GM10248 (cell line): ENCODE measurements at regions of chr1 and their contacts with region 1.

Region 1: DNA sequence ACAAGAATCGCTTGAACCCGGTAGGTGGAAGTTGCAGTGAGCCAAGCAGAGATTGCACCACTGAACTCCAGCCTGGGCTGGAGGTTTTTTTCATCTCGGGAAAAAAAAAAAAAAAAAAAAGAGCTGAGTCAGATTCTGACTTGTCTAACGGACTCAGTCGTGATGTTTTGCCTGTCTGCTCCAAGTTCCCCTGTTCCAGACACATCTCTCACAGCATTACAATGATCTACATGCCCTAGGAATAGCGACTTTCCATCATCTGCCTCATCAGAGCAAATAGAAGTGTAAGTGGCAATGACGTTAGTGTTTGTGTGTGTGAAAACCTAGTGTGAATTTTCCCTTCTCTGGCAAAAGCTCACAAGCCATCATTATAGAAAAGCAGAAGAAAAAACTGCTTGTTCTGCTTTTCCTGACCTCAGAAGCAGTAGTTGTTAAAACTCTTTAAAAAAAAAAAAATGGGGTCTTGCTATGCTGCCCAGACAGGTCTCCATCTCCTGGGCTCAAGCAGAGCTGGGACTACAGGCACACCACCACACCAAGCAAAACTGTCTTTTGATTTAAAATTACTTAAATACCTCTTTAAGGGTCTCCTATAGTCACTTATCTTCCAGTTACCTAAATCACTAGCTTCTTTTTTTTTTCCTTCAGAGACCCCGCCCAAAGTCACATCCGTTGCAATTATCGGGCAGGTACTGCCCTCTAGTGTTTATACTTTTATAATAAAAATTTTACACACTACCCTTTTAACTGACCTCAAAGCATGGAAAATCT is 37.3 kb downstream of the PLEKHO1 start:
- DNase-seq: peak; percentile 51
- CTCF ChIP-seq: no peak

Region 2: DNA sequence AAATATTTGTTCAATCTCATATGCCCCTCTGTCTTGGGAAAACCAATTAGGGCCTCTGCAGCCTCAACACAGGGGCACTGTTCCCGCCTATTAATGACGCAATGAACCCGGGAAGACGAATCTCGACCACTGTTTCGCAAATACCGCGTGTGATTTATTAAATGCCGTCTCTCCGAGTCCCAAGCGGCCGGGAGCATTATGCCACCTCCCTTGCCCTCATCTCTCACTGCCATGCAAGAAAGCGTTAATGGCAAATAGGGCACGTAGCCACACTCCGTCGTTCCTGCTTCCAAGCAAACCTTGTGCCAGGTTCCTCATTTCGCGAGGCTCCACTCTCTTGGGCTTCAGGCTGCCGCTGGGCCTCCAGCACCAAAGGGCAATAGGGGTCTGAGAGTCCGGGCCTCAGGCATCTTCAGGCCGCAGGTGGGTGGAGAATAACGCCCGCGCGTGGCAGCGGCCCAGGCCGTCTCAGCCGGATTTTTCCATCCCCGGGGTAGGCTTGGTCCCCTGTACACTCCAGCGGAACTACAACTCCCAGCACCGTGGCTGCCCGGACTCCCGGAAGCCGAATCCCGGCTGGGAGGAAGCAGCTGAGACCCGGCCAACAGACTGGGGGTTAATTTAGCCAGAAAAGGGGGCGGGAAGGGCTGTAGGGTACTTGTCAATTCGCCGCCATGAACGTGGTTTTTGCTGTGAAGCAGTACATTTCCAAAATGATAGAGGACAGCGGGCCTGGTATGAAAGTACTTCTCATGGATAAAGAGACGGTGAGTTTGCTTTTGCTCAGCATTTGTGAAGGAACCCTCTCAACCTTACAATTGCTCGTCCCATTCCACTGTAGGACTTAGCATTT is 119.6 kb before region 1 on chr1 and contains the start of gene VPS45:
- CTCF ChIA-PET with region 1: interaction called, 26 read pairs
- POLR2A ChIA-PET with region 1: interaction called, 10 read pairs
- DNase-seq: peak; percentile 88
- CTCF ChIP-seq: no peak

Region 3: DNA sequence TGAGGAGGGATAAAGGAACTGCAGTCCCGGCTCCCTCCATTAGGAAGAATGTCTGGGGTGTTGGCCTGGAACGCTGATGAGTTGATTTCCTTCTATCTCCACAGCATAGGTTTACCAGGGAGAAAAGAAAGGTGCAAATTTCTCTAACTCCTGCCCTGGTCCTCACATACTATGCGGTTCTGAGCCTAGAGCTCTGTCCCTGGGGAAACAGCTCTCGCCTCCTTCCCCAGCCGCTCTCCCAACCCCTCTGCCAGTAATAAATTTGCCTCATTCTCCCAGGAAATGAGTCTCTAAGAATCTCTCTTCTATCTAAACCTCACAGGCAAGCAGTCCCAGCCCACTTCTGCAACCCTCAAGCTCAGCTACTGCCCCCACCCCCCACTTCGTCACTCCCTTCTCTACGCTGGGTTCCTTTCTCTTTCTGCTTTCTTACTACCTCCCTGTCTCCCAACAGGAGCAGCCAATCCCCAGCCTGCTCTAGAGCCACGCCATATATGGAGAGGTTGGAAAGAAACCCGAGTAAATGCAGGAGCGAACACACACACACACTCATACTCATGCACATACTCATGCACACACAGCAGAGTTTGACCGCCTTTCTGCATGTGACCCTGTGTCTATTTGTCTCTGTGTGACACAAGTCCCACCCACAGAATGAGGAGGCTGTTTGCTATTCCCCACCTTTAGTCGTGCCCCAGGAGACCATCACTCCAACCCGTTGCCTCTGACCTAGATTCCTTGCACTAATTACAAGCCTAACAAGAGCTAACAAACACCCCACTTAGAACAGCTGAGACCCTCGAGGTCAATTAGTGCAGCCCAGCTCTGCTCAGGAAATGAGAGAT is 23.9 kb before region 1 on chr1:
- CTCF ChIA-PET with region 1: interaction called, 15 read pairs
- POLR2A ChIA-PET with region 1: interaction called, 5 read pairs
- DNase-seq: peak; percentile 75
- CTCF ChIP-seq: no peak

Region 4: GRCh38 chr1:150176593-150176992 is 10.4 kb before region 1 on chr1:
- CTCF ChIA-PET with region 1: interaction called, 25 read pairs
- POLR2A ChIA-PET with region 1: no interaction called
- DNase-seq: no peak
- CTCF ChIP-seq: no peak